ENCODE measurements at regions of chr3 and their contacts with region 1.

Region 1: DNA sequence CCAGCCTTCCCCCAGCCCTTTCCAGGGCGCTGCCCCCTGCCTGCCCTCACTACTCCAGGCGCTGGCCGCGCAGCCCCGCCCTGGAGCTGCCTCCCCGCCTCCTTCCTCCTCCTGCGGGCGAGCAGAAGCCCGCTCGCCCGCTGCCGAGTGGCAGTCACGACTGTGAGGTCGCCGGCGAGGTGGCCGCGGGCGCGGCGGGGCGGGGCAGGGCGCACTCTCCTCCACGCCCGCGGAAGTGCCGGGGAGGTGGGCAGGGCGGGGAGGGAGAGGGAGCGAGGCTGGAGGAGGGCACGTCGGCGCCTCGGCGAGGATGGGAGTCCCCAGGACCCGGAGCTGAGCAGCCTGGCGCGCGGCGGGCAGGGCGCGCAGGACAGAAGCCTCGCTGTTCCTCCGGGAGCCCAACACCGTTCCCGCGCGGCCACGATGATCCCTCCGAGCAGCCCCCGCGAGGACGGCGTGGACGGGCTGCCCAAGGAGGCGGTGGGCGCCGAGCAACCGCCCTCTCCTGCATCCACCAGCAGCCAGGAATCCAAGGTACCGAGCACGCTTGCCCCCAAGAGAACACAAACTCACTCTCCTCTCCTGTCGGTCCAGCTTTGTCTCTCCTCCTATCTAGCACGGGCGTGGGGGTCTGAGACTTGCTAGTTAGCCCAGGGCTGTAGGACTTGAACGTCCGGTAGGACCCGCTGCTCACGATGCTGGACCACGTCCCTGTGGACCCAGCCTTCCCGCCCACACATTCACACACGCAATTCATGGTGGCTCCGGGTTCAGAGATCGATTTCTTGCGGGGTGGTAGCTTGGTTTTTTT is at the start of gene STAC:
- DNase-seq: peak; percentile 58 to 85
- ATAC-seq: peak; percentile 86
- H3K4me3 ChIP-seq: peak within 1 kb of the TSS; percentile 22 to 73
- H3K27ac ChIP-seq: no peak within 1 kb of the TSS
- H3K4me1 ChIP-seq: peaks cover 2% of the 10 kb centered on the region in 2 donors
- H3K27me3 ChIP-seq: no peaks in the 10 kb centered on the region
- total RNA-seq, gene STAC: 12.5 to 14.2 TPM

Region 2: GRCh38 chr3:35965908-35966307 is 414.5 kb before region 1 on chr3:
- intact Hi-C with region 1: loop called in 1 of 2 experiments (anchors 5 kb)
- DNase-seq: no peak
- ATAC-seq: peak; percentile 82
- H3K4me3 ChIP-seq: no peak overlapping the region
- H3K27ac ChIP-seq: no peak overlapping the region
- H3K4me1 ChIP-seq: no peaks in the 10 kb centered on the region
- H3K27me3 ChIP-seq: no peaks in the 10 kb centered on the region

Region 3: DNA sequence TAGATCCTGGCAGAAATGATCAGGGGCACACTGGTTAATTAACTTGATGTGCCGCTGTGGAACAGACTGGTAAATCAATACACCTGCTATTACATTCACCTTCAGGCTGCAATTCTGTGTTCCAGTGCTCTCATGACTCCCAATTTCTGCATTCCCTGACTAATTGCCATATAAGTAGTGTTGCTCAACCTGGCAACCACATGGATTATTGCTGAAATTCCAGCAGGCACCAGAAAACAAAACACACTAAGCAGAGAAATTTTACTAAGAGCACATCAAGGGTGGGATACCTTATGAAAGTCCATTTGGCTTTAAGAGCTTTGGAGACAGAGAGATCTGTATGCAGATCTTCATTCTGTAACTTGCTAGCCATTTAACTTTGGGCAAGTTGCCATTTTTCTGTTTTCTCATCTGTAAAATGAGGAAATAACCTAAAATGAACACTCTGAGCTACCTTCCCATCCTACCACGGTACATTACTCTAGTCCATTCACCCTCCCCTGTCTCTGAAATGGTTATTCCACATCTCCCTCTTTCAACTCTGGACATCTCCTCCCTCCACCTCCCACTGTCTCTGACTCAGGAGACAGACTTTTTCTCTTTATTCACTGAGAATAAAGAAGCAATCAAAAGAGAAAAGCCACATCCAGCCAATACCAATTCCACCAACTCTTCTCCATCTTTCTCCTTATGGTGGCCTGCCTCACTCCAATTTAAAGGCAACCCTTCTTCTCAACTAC is 54.4 kb after region 1 on chr3:
- intact Hi-C with region 1: loop called in 1 of 2 experiments (anchors 10 kb)
- DNase-seq: no peak
- ATAC-seq: peak; percentile 30
- H3K4me3 ChIP-seq: no peak overlapping the region
- H3K27ac ChIP-seq: no peak overlapping the region
- H3K4me1 ChIP-seq: peaks cover 0 to 12% of the 10 kb centered on the region in 2 donors
- H3K27me3 ChIP-seq: no peaks in the 10 kb centered on the region

Region 4: GRCh38 chr3:36444909-36445308 is 64.5 kb after region 1 on chr3:
- intact Hi-C with region 1: loop called in 1 of 2 experiments (anchors 5 kb)
- DNase-seq: no peak
- ATAC-seq: no peak
- H3K4me3 ChIP-seq: no peak overlapping the region
- H3K27ac ChIP-seq: no peak overlapping the region
- H3K4me1 ChIP-seq: peaks cover 0 to 3% of the 10 kb centered on the region in 2 donors
- H3K27me3 ChIP-seq: no peaks in the 10 kb centered on the region

Region 5: DNA sequence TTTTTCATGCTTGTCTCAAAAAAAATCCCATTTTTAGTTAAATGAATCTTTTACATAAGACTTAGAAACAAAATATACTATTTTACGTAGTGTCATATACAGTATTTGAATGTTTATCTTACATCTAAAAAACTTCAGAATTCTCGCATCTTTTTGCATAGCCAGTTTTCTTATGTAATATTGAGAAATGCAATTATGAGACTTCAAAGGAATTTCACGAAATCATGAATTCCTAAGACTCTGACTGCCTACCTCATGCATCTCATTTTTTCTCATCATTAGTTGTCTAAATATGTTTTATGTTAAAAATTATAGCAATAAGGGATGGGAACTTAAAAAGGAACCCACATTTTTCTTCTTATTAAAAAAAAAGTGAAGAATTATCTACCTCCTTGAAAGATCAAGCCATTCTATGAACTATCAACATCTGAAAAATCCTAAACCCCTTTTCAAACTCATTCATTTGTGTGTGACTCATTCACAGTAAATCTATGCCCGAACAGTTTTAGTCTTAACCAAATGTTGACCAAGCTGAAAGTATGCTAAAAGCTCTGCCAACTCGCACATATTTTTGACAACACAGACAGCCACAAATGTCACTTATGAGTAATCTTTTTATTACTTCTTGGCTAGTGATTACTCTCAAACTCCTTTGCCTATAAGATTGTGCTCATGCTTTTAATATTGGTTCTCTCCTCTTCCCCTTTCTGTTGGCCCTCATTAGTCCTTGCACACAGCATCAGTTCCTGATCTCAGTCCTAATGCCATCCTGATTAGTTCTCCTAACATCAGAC is 268.0 kb after region 1 on chr3:
- intact Hi-C with region 1: loop called in 1 of 2 experiments (anchors 10 kb)
- DNase-seq: no peak
- ATAC-seq: no peak
- H3K4me3 ChIP-seq: no peak overlapping the region
- H3K27ac ChIP-seq: peak overlapping the region in 1 of 2 donors; percentile 53
- H3K4me1 ChIP-seq: peaks cover 0 to 6% of the 10 kb centered on the region in 2 donors
- H3K27me3 ChIP-seq: no peaks in the 10 kb centered on the region

Measured in aorta (tissue), 5 donors.